Aorta (tissue), 5 donors: ENCODE measurements at regions of chr1 and their contacts with region 1.

Region 1: DNA sequence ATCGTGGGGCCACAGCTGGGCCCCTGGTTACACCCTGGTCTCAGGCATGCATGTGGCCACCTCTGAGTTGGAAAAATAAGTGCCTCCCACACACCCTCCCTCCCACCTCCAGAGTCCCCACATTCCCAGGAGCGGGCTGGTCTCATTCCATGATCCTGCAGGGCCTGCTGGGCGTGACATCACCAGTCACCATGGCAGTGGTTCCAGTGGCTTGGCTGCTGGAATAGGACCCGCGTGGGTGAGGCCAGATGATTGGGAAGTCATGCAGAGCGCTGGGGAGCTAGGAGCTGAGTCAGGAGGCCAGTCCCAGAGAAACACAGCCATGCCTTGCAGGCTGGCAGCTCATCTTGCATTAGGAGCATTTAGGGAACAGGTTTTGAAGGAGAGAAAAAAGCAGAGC is 125.4 kb upstream of the TMEM51 start:
- DNase-seq: peak; percentile 89
- ATAC-seq: peak; percentile 73
- H3K4me3 ChIP-seq: no peak overlapping the region
- H3K27ac ChIP-seq: peak overlapping the region in 1 of 2 donors; percentile 52
- H3K4me1 ChIP-seq: no peaks in the 10 kb centered on the region
- H3K27me3 ChIP-seq: no peaks in the 10 kb centered on the region

Region 2: DNA sequence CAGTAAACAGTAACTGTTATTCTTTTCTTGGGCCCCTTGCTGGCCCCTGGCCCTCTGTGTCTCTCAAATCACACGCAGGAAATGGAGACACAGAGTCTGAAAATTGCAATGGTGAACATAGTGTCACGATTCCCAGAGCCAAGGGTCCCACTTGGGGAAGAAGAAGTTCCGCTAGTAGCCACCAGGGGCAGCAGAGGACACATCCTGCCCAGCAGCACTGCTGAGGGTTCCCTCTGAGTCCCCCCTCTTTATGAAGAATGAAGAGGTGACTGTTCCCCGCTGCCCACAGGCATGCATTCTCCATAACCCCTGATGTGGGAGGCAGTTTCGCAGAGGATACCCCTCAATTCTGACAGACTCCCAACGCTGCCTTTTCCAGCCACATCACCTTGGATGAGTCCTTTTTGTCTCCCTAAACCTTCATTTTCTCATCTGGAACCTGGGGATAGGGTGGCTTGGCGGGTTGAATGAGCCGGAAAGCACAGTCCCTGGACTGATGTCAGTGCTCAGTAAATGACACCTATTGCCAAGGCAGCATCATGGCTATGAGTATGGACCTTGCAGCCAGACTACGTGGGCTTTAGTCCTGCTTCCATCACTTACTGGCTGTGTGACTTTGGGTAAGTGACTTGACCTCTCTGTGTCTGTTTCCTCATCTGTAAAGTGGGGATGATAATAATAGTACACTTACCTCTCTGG is 112.6 kb before region 1 on chr1:
- intact Hi-C with region 1: loop called in 1 of 2 experiments (anchors 5 kb)
- DNase-seq: no peak
- ATAC-seq: peak; percentile 39
- H3K4me3 ChIP-seq: no peak overlapping the region
- H3K27ac ChIP-seq: no peak overlapping the region
- H3K4me1 ChIP-seq: no peaks in the 10 kb centered on the region
- H3K27me3 ChIP-seq: no peaks in the 10 kb centered on the region

Region 3: GRCh38 chr1:14923727-14924452 is 104.2 kb before region 1 on chr1:
- intact Hi-C with region 1: loop called (anchors 2 to 5 kb)
- DNase-seq: peak; percentile 81 to 93
- ATAC-seq: peak; percentile 71
- H3K4me3 ChIP-seq: peak overlapping the region; percentile 12 to 53
- H3K27ac ChIP-seq: no peak overlapping the region
- H3K4me1 ChIP-seq: peaks cover 3% of the 10 kb centered on the region in 2 donors
- H3K27me3 ChIP-seq: no peaks in the 10 kb centered on the region